Psoas muscle (tissue), 8 donors: ENCODE measurements at regions of chr2 and their contacts with region 1.

Region 1: DNA sequence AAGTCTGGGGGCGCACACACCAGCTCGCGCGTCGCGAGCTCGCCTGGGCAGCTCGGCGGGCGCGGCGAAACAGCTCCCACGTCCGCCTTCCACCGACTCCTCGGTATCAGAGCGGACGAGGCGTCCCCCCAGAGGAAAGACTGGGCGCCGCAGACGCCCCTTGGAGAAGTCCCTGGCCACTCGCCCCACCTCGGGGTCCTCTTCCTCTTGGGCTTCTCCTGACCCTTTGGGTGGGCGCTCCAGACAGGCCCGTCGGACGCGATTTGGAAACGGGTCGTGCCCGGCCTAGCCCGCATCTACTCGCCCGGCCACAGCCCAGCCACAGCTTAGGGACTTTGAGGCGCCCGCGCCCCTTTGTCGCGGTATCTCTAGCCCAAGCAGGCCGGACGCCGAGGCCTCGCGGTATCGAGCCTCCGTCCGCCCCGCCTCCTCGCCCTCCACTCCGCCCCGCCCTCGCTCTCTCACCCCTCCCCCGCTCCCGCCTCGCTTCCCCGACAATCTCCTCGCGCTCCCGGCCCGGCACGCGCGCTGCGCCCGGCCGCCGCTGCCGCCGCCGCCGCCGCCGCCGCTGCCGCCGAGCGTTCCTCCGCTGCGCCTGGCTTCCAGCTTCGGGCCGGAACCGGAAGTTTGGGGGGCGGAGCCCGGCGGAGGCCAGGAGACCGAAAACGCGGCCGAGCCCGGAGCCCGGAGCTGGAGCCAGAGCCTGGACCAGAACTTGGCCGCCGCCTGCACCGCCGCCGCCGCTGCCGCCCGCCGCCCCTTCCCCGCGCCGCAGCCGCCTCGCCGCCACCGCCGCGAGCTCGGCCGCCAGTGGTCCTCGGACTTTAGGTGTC is 749 bp upstream of the ACVR2A start:
- DNase-seq: peak; percentile 95 to 97
- ATAC-seq: peak; percentile 93 to 94 (median 93)
- H3K4me3 ChIP-seq: peak overlapping the region; percentile 93
- H3K27ac ChIP-seq: peak overlapping the region; percentile 99
- H3K4me1 ChIP-seq: peaks cover 22% of the 10 kb centered on the region
- H3K27me3 ChIP-seq: no peaks in the 10 kb centered on the region
- CTCF ChIP-seq: peak; percentile 8

Region 2: DNA sequence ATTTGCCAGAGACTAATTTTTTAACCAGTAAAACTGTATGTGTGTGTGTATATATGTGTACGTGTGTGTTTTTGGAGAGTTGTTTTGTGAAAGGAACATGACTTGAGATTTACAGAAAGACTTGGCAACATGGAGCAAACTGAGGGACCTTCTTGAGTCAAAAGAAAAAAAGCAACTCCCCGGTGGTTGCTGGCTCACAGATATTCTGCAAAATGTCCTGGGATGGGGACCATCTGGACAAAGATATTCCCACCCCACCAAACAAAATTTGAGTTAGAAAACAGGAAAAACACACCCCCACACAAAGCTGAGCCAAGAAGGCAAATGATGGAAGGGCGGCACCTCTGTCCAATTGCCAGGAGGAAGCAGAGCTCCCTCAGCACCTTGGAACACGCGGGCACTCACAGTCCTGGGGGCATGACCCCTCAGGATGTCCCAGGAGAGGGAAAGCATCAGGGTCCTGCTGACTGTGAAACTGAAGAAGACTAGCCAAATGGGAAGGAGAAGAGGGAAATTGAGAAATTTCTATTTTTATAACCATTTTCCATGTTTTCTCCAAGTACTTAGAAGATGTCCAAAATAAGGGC is 289.5 kb before region 1 on chr2:
- intact Hi-C with region 1: loop called in 1 of 2 experiments (anchors 5 kb)
- DNase-seq: peak; percentile 23 to 71
- ATAC-seq: peak in 2 of 4 donors; percentile 46 to 69
- H3K4me3 ChIP-seq: no peak overlapping the region
- H3K27ac ChIP-seq: peak overlapping the region; percentile 57
- H3K4me1 ChIP-seq: no peaks in the 10 kb centered on the region
- H3K27me3 ChIP-seq: no peaks in the 10 kb centered on the region
- CTCF ChIP-seq: no peak

Region 3: GRCh38 chr2:147884830-147885229 is 40.8 kb after region 1 on chr2:
- intact Hi-C with region 1: loop called (anchors 5 kb)
- DNase-seq: no peak
- ATAC-seq: no peak
- H3K4me3 ChIP-seq: no peak overlapping the region
- H3K27ac ChIP-seq: no peak overlapping the region
- H3K4me1 ChIP-seq: peaks cover 19% of the 10 kb centered on the region
- H3K27me3 ChIP-seq: no peaks in the 10 kb centered on the region
- CTCF ChIP-seq: no peak

Region 4: GRCh38 chr2:147904044-147904443 is 60.0 kb after region 1 on chr2:
- intact Hi-C with region 1: loop called in 1 of 2 experiments (anchors 10 kb)
- DNase-seq: no peak
- ATAC-seq: no peak
- H3K4me3 ChIP-seq: no peak overlapping the region
- H3K27ac ChIP-seq: no peak overlapping the region
- H3K4me1 ChIP-seq: peaks cover 5% of the 10 kb centered on the region
- H3K27me3 ChIP-seq: no peaks in the 10 kb centered on the region
- CTCF ChIP-seq: no peak